A673 (cell line): ENCODE measurements at regions of chr12 and their contacts with region 1.

Region 1: DNA sequence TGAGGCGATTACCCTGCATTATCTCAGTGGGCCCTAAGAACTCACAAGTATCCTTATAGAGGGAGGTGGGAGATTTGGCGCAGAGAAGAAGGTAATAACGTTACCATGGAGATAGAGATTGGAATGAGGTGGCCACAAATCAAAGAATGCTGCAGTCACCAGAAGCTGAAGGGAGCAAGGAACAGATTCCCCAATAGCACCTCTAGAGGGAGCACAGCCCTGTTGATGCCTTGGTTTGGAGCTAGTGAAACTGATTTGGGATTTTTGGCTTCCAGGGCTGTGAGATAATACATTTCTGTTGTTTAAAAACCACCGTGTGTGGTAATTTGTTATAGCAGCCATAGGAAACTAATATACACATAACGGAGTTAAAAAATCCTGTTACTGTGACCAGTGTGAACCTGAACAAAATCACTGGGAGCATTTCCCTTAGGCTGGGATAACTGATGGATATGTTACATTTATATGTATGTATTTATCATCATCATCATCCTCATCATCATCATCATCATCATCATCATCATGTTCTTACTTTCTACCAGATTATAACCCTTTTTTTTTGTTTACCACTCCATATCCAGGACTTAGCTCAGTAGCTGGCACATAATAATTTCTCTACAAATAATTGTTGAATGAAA is 100.3 kb downstream of the LIN7A start:
- DNase-seq: peak; percentile 82
- H3K4me3 ChIP-seq: no peak overlapping the region
- H3K27ac ChIP-seq: no peak overlapping the region
- H3K4me1 ChIP-seq: peaks cover 6% of the 10 kb centered on the region
- H3K27me3 ChIP-seq: no peaks in the 10 kb centered on the region
- CTCF ChIP-seq: peak; percentile 88

Region 2: GRCh38 chr12:80946594-80946993 is 109.1 kb after region 1 on chr12:
- CTCF ChIA-PET with region 1: interaction called, 7 read pairs
- POLR2A ChIA-PET with region 1: no interaction called
- intact Hi-C with region 1: loop called (anchors 2 kb)
- DNase-seq: peak; percentile 38
- H3K4me3 ChIP-seq: no peak overlapping the region
- H3K27ac ChIP-seq: no peak overlapping the region
- H3K4me1 ChIP-seq: peaks cover 7% of the 10 kb centered on the region
- H3K27me3 ChIP-seq: no peaks in the 10 kb centered on the region
- CTCF ChIP-seq: peak; percentile 55

Region 3: GRCh38 chr12:81010641-81011040 is 173.2 kb after region 1 on chr12:
- CTCF ChIA-PET with region 1: no interaction called
- POLR2A ChIA-PET with region 1: no interaction called
- intact Hi-C with region 1: no loop called
- DNase-seq: no peak
- H3K4me3 ChIP-seq: no peak overlapping the region
- H3K27ac ChIP-seq: no peak overlapping the region
- H3K4me1 ChIP-seq: no peaks in the 10 kb centered on the region
- H3K27me3 ChIP-seq: no peaks in the 10 kb centered on the region
- CTCF ChIP-seq: no peak